Heart right ventricle (tissue), 16 donors: ENCODE measurements at regions of chr7 and their contacts with region 1.

Region 1: DNA sequence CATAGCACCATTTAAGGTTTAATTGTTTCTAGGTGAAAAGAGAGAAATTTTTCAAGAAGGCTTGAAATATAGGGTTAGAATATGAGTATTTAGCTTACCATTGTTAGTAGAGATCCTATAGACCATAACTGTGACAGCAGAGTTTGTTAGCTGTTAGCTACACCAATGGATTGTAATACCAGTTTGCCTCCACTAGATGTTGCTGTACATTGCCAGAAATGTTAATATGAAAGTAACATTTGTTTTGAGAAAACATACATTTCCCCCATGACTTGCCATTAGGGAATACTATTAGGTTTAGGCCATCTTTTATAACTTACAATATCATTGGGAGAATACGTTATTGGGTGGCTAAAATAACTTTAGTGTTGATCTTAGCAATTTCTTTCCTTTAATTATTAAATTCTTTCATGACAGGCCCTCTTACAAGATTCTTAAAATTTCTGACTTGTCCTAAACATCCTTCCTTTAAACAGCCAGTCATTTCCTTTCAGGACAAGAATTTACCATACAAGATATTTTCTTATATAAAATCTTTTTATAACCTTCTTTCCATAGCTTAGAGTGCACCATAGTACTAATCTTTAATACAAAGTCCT is 39.5 kb downstream of the ZNF117 start:
- DNase-seq: no peak
- ATAC-seq: peak in 6 of 8 donors; percentile 24 to 59 (median 48)
- H3K4me3 ChIP-seq: no peak overlapping the region
- H3K27ac ChIP-seq: no peak overlapping the region
- H3K4me1 ChIP-seq: peaks cover 0 to 12% (median 11%) of the 10 kb centered on the region in 9 donors
- H3K27me3 ChIP-seq: peaks cover 10 to 38% (median 23%) of the 10 kb centered on the region in 7 donors
- CTCF ChIP-seq: peak; percentile 42 to 90 (median 87)

Region 2: DNA sequence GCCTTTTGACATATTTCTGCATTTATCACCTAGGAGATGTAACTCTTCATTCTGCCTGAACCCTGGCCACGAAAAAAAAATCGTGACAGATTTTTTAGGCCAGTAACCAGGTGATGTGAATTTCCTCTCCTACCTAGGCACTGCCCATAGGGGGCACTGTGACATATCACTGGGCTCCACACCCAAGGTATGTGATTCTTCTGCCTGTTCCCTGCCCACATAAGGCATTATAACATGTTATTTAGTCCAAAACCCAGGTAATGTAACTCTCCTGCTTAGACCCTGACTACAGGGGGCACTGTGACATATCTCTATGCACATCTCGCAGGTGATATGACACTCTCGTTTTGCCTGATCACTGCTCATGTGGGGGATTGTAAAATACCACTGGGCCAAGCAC is 315.0 kb before region 1 on chr7:
- intact Hi-C with region 1: no loop called
- DNase-seq: no peak
- ATAC-seq: no peak
- H3K4me3 ChIP-seq: no peak overlapping the region
- H3K27ac ChIP-seq: no peak overlapping the region
- H3K4me1 ChIP-seq: no peaks in the 10 kb centered on the region
- H3K27me3 ChIP-seq: no peaks in the 10 kb centered on the region
- CTCF ChIP-seq: peak in 4 of 9 donors; percentile 19 to 26 (median 22)

Region 3: DNA sequence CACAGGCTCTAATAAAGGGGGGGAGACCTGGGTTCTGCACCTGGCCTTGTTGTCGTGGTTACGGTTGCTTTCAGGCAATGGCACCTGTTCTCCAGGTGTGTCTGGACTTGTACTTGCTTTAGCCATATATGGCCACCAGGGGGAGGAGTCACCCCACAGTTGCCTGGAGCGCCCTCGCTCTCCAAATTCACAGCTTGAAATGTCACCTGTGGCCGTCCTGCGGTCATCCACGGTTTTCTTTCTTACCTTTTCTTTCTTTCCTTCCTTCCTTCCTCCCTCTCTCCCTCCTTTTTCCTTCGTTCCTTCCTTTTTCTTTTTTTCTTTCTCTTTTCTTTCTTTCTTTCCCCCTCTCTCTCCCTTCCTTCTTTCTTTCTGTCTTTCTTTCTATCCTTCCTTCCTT is 265.1 kb after region 1 on chr7:
- intact Hi-C with region 1: loop called in 2 of 10 experiments (anchors 5 to 10 kb)
- DNase-seq: peak in 1 of 2 donors; percentile 32
- ATAC-seq: peak in 1 of 8 donors; percentile 56
- H3K4me3 ChIP-seq: no peak overlapping the region
- H3K27ac ChIP-seq: no peak overlapping the region
- H3K4me1 ChIP-seq: no peaks in the 10 kb centered on the region
- H3K27me3 ChIP-seq: no peaks in the 10 kb centered on the region
- CTCF ChIP-seq: peak; percentile 24 to 69 (median 63)

Region 4: DNA sequence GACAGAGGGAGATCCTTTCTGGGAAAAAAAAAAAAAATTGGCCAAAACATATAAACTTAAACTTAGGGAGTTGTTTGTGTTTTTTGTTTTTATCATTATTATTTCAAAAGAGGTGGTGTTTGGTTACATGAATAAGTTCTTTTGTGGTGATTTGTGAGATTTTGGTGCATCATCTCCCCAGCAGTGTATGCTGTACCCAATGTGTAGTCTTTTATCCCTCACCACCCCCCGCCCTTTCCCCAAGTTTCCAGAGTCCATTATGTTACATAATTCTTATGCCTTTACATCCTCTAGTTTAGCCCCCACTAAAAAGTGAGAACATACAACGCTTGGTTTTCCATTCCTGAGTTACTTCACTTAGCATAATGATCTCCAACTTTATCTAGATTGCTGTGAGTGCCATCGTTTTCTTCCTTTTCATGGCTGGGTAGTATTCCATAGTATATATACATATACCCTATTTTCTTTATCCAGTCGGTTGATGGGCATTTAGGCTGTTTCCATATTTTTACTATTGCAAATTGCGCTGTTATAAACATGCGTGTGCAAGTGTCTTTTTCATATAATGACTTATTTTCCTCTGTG is 274.2 kb after region 1 on chr7:
- intact Hi-C with region 1: loop called in 1 of 10 experiments (anchors 10 kb)
- DNase-seq: no peak
- ATAC-seq: no peak
- H3K4me3 ChIP-seq: no peak overlapping the region
- H3K27ac ChIP-seq: no peak overlapping the region
- H3K4me1 ChIP-seq: no peaks in the 10 kb centered on the region
- H3K27me3 ChIP-seq: no peaks in the 10 kb centered on the region
- CTCF ChIP-seq: no peak

Region 5: DNA sequence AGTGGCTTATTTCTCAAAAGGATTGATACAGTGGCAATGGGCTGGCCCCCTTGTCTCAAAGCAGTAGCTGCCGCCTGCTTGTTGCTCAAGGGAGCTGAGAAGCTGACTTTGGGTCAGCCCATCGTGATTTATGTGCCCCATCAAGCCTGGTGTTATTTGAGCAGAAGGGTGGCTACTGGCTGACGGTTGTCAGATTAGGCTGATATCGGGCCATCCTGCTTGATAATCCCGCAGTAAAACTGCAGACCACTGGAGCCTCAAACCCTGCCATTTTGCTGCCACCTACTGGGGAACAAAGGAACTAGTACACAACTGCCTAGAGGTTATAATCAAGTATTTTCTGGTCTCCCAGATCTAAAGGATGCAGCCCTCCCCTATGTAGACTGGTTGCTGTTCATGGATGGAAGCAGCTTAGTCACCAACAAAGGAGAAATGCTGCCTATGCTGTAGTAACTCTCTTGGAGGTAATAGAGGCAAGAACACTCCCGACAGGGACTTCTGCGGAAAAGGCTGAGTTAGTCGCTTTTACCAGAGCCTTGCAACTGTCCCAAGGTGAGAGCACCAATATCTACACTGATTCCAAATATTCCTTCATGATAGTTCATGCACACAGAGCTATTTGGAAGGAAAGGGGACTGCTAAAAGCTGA is 356.4 kb after region 1 on chr7:
- intact Hi-C with region 1: loop called in 9 of 10 experiments (anchors 2 to 5 kb)
- DNase-seq: peak in 1 of 2 donors; percentile 28
- ATAC-seq: peak in 7 of 8 donors; percentile 51 to 72 (median 67)
- H3K4me3 ChIP-seq: no peak overlapping the region
- H3K27ac ChIP-seq: no peak overlapping the region
- H3K4me1 ChIP-seq: no peaks in the 10 kb centered on the region
- H3K27me3 ChIP-seq: peaks cover 0 to 21% (median 9%) of the 10 kb centered on the region in 7 donors
- CTCF ChIP-seq: peak; percentile 58 to 91 (median 83)